Right ventricle myocardium inferior (tissue), 1 donor: ENCODE measurements at regions of chr10 and their contacts with region 1.

Region 1: GRCh38 chr10:57338823-57339558 is 928.7 kb downstream of the IPMK start:
- DNase-seq: no peak
- ATAC-seq: no peak

Region 2: DNA sequence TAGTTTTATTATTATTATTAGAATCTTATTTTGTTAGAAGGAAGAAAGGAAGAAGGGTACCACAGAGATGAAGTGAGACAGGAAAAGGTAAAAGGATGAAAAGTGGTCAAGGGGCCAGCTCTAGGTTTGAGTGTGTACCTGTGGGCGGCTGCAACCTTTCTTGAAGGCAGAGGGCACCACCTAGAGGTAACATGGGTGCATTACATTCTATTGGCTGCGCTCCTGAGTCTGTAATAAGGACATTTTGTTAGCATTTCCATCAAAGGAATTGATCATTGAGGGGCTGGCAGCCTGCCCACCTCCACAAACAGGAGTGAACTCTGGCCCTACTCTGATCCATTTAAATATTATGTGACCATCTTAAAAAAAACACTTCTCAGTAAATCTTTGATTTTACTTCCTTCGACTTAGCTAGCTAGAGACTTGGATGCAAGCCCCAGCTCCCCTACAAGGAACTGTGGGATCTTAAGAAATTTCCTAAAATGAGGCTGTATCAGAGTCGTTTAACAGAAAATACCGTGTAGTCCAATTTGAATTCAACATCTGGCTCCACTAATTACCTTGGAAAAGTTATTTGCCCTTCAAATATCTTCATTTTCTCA is 318.3 kb after region 1 on chr10:
- intact Hi-C with region 1: loop called (anchors 5 kb)
- DNase-seq: no peak
- ATAC-seq: no peak

Region 3: DNA sequence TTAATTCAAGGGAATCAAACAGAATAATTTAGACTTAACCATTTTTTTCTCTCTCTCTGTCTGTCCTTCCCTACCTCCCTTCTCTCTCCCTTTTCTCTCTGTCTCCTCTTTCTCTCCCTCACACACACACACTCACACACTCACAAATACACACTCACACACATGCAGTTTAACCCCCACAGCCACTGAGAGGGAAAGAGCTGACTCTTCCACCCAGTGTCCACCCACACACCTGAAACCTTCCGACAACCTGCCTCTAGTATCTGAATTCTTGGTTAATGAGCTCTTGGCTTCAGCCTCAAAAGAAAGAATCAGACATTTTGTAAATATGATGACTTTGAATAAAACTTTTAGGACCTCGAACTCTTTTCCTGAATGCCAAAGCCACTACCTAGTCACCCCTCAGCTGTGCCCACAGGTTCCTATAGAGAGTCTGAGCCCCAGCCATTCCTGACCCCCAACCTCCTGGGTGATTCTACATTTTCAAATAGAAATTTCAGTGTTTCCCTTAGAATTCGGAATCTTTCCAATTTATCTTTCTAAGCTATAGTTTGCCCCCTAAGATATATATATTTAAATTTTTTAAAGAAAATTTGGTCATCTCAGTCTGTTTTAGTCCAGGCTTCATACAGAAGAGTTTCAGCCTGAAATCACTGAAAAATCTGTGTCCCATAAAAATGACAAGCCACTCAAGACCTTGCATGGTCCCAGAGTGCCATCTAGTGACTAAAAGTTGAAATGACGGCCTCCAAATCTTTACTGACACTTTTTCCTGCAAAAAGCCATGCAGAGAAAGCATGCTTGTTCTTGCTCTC is 725.9 kb after region 1 on chr10:
- intact Hi-C with region 1: loop called (anchors 10 kb)
- DNase-seq: no peak
- ATAC-seq: no peak

Region 4: DNA sequence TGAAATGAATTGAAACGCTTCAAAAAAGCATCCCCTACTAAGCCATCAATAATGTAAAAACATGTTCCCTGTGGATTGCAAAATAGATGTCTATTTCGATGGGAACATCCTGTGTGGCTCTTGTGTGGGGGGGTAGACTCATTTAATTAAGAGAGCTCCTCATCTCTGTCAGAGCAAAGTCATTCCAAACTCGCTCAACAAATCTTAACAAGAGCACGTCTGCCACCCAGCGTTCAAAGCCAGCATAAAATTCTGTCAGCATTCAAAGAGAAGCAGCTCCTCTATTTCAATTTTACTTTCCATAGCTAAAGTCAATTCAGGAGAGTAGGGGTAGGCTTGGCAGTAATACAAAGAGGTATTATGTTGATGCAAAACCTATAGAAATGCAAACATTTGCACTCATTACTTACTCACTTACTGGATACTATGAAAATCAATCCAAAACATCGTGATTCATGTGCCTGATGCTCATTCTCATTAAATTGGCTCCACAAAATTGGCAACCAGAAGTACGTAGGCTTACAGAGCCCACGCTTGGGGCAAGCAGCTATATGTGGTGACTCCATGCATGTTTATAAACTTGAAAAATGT is 813.8 kb after region 1 on chr10:
- intact Hi-C with region 1: loop called (anchors 10 kb)
- DNase-seq: no peak
- ATAC-seq: no peak